CD8-positive, alpha-beta T cell (primary cell): ENCODE measurements at regions of chr17 and their contacts with region 1.

Region 1: GRCh38 chr17:32755045-32755805 is 121.7 kb downstream of the MYO1D start:
- DNase-seq: peak in 2 of 9 experiments; percentile 60 to 71
- ATAC-seq: peak; percentile 87
- H3K4me3 ChIP-seq: no peak overlapping the region
- H3K4me3 Mint-ChIP-seq: no peak overlapping the region
- H3K27ac ChIP-seq: no peak overlapping the region
- H3K27ac Mint-ChIP-seq: no peak overlapping the region
- H3K4me1 ChIP-seq: peaks cover 8% of the 10 kb centered on the region
- H3K4me1 Mint-ChIP-seq: peaks cover 10% of the 10 kb centered on the region
- H3K27me3 ChIP-seq: no peaks in the 10 kb centered on the region
- H3K27me3 Mint-ChIP-seq: no peaks in the 10 kb centered on the region
- CTCF ChIP-seq: peak; percentile 54

Region 2: DNA sequence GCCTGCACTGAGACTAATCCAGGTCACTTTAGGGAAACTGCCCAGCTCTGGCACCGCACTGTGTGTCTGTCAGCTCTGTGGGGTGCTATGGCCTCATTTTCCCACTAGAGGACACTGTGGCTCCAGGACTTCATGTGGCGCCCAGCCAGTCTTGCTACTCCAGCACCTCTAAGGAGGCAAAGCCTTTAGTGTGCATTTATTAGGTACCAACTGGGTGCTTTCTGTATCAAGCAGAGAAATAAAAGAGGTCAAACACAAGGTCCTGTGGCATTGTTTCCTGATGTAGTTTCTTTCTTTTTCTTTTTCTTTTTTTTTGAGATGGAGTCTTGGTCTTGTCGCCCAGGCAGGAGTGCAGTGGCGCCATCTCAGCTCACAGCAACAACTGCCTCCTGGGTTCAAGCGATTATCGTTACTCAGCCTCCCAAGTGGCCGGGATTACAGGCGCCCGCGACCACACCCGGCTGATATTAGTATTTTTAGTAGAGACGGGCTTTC is 502.1 kb before region 1 on chr17:
- CTCF ChIA-PET with region 1: no interaction called
- POLR2A ChIA-PET with region 1: no interaction called
- intact Hi-C with region 1: loop called (anchors 5 to 10 kb)
- DNase-seq: peak; percentile 24 to 75 (median 60)
- ATAC-seq: peak; percentile 94
- H3K4me3 ChIP-seq: no peak overlapping the region
- H3K4me3 Mint-ChIP-seq: no peak overlapping the region
- H3K27ac ChIP-seq: no peak overlapping the region
- H3K27ac Mint-ChIP-seq: no peak overlapping the region
- H3K4me1 ChIP-seq: no peaks in the 10 kb centered on the region
- H3K4me1 Mint-ChIP-seq: no peaks in the 10 kb centered on the region
- H3K27me3 ChIP-seq: no peaks in the 10 kb centered on the region
- H3K27me3 Mint-ChIP-seq: peaks cover 4% of the 10 kb centered on the region
- CTCF ChIP-seq: peak; percentile 65

Region 3: DNA sequence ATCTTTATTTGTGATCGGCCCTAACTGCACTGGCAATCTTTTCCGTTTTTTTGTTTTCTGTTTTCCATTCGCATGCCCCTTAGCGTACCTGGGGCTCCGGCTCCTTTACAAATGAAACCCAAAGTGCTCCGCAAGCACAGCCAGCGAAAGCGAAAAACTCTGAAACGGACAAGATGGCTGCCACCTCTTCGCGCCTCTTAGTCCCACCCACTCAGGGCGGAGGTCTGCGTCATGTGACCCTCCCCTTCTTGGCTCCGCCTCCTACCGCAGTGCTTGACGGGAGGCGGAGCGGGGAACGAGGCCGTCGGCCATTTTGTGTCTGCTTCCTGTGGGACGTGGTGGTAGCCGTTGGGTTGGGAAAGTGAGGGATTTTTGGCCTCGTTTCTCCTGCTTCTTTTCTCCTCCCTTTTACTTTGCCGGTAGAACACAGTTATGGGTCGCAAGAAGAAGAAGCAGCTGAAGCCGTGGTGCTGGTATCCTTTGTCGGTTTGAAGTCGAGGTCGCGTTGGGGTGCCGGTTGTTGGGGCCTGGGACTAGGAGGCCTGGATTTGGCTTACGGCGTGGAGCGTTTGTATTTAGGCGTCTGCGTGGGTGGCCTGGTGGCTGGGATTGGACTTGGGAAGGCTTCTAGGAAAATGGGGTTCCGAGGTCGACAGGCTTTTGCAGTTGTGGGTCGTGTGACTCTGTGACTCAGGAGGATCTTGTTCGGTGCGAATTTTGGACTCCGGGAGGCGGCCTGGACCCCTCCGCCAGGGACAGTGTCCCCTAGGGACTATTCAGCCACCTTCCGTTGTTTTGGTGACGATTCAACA is 405.2 kb before region 1 on chr17 and contains the start of gene ZNF207:
- CTCF ChIA-PET with region 1: no interaction called
- POLR2A ChIA-PET with region 1: no interaction called
- intact Hi-C with region 1: loop called (anchors 10 kb)
- DNase-seq: peak; percentile 90 to 99 (median 94)
- ATAC-seq: peak; percentile 98
- H3K4me3 ChIP-seq: peak within 1 kb of the TSS; percentile 94 to 97
- H3K4me3 Mint-ChIP-seq: peak within 1 kb of the TSS; percentile 96
- H3K27ac ChIP-seq: peak within 1 kb of the TSS; percentile 90 to 99
- H3K27ac Mint-ChIP-seq: peak within 1 kb of the TSS; percentile 98
- H3K4me1 ChIP-seq: peaks cover 34% of the 10 kb centered on the region
- H3K4me1 Mint-ChIP-seq: peaks cover 34% of the 10 kb centered on the region
- H3K27me3 ChIP-seq: no peaks in the 10 kb centered on the region
- H3K27me3 Mint-ChIP-seq: no peaks in the 10 kb centered on the region
- CTCF ChIP-seq: no peak
- total RNA-seq, gene ZNF207: 276 to 277 TPM

Region 4: GRCh38 chr17:32609085-32609484 is 146.1 kb before region 1 on chr17:
- CTCF ChIA-PET with region 1: no interaction called
- POLR2A ChIA-PET with region 1: no interaction called
- intact Hi-C with region 1: loop called in 1 of 2 experiments (anchors 5 kb)
- DNase-seq: peak; percentile 49 to 86 (median 74)
- ATAC-seq: peak; percentile 100
- H3K4me3 ChIP-seq: no peak overlapping the region
- H3K4me3 Mint-ChIP-seq: no peak overlapping the region
- H3K27ac ChIP-seq: no peak overlapping the region
- H3K27ac Mint-ChIP-seq: no peak overlapping the region
- H3K4me1 ChIP-seq: peaks cover 8% of the 10 kb centered on the region
- H3K4me1 Mint-ChIP-seq: peaks cover 6% of the 10 kb centered on the region
- H3K27me3 ChIP-seq: no peaks in the 10 kb centered on the region
- H3K27me3 Mint-ChIP-seq: no peaks in the 10 kb centered on the region
- CTCF ChIP-seq: peak; percentile 64